K562 (cell line): ENCODE measurements at regions of chr4 and their contacts with region 1.

Region 1: GRCh38 chr4:134201216-134202098 is at the start of gene PABPC4L:
- DNase-seq: peak; percentile 6 to 58 (median 24)
- ATAC-seq: peak; percentile 90
- H3K4me3 ChIP-seq: peak within 1 kb of the TSS; percentile 37
- H3K27ac ChIP-seq: peak within 1 kb of the TSS; percentile 57; the same call in 2 of the 3 replicates
- H3K4me1 ChIP-seq: peaks cover 0 to 4% of the 10 kb centered on the region in 2 experiments; a peak in 3 of 5 replicates
- H3K27me3 ChIP-seq: no peaks in the 10 kb centered on the region
- CTCF ChIP-seq: no peak
- EP300 ChIP-seq: no peak
- POLR2A ChIP-seq: no peak
- RAD21 ChIP-seq: no peak
- polyA plus RNA-seq, gene PABPC4L: 0.25 to 0.29 TPM

Region 2: DNA sequence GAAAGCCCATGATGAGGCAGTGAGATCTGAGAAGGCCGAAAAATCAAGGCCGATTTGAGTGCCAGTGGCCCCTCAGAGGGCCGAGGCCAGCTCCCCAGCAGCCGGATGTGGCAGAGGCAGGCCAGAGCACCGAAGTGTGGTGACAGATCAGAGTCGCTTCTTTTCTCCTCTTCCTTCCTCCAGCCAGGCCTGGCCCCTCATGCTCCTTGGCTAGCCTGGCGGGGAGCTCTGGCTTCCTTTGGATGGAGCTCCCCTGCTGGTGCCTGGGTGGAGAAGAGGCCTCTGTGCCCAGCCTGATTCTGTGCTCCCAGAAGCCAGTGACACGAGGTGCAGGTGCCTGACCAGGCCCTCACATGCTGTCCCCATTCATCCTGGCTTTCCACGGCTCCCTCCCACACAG is 127.3 kb after region 1 on chr4:
- CTCF ChIA-PET with region 1: no interaction called
- POLR2A ChIA-PET with region 1: no interaction called
- in situ Hi-C with region 1: no loop called
- intact Hi-C with region 1: loop called (anchors 5 kb)
- DNase-seq: peak; percentile 6 to 53 (median 8)
- ATAC-seq: peak; percentile 42
- H3K4me3 ChIP-seq: peak overlapping the region; percentile 50
- H3K27ac ChIP-seq: peak overlapping the region; percentile 75
- H3K4me1 ChIP-seq: peaks cover 0 to 4% of the 10 kb centered on the region in 2 experiments; a peak in 1 of 5 replicates
- H3K27me3 ChIP-seq: no peaks in the 10 kb centered on the region
- CTCF ChIP-seq: no peak
- EP300 ChIP-seq: no peak
- POLR2A ChIP-seq: no peak
- RAD21 ChIP-seq: 0 out of 4 replicates have a peak, but pooled peaks of 1 of the 2 experiments have one; percentile 7